Caco-2 (cell line): ENCODE measurements at regions of chr4 and their contacts with region 1.

Region 1: GRCh38 chr4:168710353-168710946 is 213.6 kb downstream of the PALLD start:
- DNase-seq: peak; percentile 30 to 36
- H3K4me3 ChIP-seq: no peak overlapping the region
- H3K4me3 Mint-ChIP-seq: no peak overlapping the region
- H3K27ac Mint-ChIP-seq: no peak overlapping the region
- H3K4me1 ChIP-seq: no peaks in the 10 kb centered on the region
- H3K4me1 Mint-ChIP-seq: no peaks in the 10 kb centered on the region
- H3K27me3 ChIP-seq: no peaks in the 10 kb centered on the region; the same call in 1 of the 2 replicates
- H3K27me3 Mint-ChIP-seq: peaks cover 3% of the 10 kb centered on the region
- CTCF ChIP-seq: peak; percentile 36 to 58

Region 2: DNA sequence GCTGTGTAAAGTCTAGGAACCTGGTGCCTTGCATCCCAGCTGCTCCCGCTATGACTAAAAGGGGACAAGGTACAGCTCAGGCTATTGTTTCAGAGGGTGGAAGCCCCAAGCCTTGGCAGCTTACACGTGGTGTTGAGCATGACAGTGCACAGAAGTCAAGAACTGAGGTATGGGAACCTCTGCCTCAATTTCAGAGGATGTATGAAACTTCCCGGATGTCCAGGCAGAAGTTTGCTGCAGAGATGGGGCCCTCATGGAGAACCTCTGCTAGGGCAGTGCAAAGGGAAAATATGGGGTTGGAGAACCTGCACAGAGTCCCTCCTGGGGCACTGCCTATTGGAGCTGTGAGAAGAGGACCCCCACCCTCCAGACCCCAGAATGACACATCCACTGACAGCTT is 468.5 kb before region 1 on chr4:
- CTCF ChIA-PET with region 1: no interaction called
- POLR2A ChIA-PET with region 1: no interaction called
- intact Hi-C with region 1: no loop called
- DNase-seq: no peak
- H3K4me3 ChIP-seq: no peak overlapping the region
- H3K4me3 Mint-ChIP-seq: no peak overlapping the region
- H3K27ac Mint-ChIP-seq: no peak overlapping the region
- H3K4me1 ChIP-seq: no peaks in the 10 kb centered on the region
- H3K4me1 Mint-ChIP-seq: no peaks in the 10 kb centered on the region
- H3K27me3 ChIP-seq: no peaks in the 10 kb centered on the region
- H3K27me3 Mint-ChIP-seq: no peaks in the 10 kb centered on the region
- CTCF ChIP-seq: no peak

Region 3: GRCh38 chr4:168528131-168528949 is 182.1 kb before region 1 on chr4:
- CTCF ChIA-PET with region 1: no interaction called
- POLR2A ChIA-PET with region 1: no interaction called
- intact Hi-C with region 1: no loop called
- DNase-seq: no peak
- H3K4me3 ChIP-seq: no peak overlapping the region
- H3K4me3 Mint-ChIP-seq: no peak overlapping the region
- H3K27ac Mint-ChIP-seq: no peak overlapping the region
- H3K4me1 ChIP-seq: no peaks in the 10 kb centered on the region
- H3K4me1 Mint-ChIP-seq: no peaks in the 10 kb centered on the region
- H3K27me3 ChIP-seq: no peaks in the 10 kb centered on the region
- H3K27me3 Mint-ChIP-seq: no peaks in the 10 kb centered on the region
- CTCF ChIP-seq: no peak

Region 4: GRCh38 chr4:168585168-168586091 is 125.0 kb before region 1 on chr4:
- CTCF ChIA-PET with region 1: no interaction called
- POLR2A ChIA-PET with region 1: no interaction called
- intact Hi-C with region 1: loop called (anchors 5 kb)
- DNase-seq: peak; percentile 63 to 67
- H3K4me3 ChIP-seq: no peak overlapping the region
- H3K4me3 Mint-ChIP-seq: no peak overlapping the region
- H3K27ac Mint-ChIP-seq: no peak overlapping the region
- H3K4me1 ChIP-seq: no peaks in the 10 kb centered on the region
- H3K4me1 Mint-ChIP-seq: no peaks in the 10 kb centered on the region
- H3K27me3 ChIP-seq: no peaks in the 10 kb centered on the region
- H3K27me3 Mint-ChIP-seq: no peaks in the 10 kb centered on the region
- CTCF ChIP-seq: peak; percentile 52 to 62

Region 5: DNA sequence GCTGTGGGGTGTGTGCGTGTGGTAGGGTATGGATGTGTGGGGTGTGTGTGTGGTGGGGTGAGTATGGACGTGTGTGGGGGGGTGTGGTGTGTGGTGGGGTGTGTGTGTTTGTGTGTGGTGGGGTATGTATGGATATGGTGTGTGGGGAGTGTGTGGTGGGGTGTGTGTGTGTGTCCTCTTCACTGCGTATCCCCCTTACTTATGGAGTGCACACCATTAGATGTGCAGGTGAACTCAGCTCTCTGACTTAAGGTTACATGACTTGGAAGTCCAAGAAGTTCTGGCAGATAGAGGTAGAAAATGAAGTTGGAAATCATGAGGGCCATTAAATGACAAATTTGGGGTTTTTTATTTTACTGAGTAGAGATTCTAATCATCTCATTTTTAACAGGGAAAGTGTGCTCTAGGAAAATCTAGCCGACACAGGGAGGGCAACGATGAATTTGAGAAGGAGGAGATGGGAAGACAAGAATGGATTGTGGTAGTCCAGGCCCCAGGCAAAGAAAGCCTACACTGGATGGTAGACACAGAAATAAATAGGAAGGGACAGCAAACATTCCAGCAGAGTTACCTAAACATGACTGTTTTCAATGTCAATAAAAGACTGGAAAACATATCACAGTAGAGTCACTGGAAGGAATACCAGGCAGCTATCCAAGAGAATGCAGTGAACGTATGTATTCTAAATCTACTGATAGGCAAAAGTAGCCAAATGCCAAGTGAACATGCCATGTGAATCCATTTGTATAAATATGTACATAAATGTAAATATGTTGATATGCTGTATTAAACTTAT is 30.9 kb before region 1 on chr4:
- CTCF ChIA-PET with region 1: no interaction called
- POLR2A ChIA-PET with region 1: no interaction called
- intact Hi-C with region 1: no loop called
- DNase-seq: no peak
- H3K4me3 ChIP-seq: no peak overlapping the region
- H3K4me3 Mint-ChIP-seq: no peak overlapping the region
- H3K27ac Mint-ChIP-seq: no peak overlapping the region
- H3K4me1 ChIP-seq: peaks cover 6% of the 10 kb centered on the region; the same call in 1 of the 2 replicates
- H3K4me1 Mint-ChIP-seq: peaks cover 6% of the 10 kb centered on the region
- H3K27me3 ChIP-seq: no peaks in the 10 kb centered on the region
- H3K27me3 Mint-ChIP-seq: no peaks in the 10 kb centered on the region
- CTCF ChIP-seq: no peak

Region 6: DNA sequence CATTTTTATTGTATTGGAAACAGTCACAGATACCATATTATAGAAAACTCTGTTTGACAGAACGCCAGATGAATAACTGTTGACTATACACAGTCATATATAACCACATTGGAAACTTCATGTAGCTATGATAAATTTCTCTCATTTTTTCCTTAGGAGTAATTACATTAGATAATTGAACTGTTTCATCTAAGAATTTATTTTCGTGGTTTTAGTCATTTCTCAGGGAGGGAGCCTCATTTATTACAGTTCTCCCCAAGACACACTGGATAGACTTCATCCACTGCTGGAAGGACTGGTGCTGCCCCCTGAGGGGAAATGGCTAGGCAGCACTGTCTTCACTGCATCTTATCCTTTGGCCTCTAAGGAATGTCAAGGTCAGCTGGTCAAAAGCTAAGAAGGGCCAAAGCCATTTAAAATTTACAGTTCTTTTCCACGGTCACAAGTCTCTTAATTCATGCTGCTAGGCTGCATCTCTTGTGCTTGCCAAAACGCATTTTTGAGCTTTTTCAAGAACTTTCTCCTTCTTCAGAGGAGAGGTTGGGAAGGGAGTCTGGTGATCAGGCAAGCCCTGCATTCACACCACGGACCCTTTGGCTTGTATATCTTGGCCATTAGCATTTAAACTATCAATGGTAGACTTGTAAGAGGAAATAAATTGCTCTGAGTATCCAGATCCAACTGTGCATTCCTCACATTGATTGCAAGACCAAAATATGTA is 154.5 kb after region 1 on chr4:
- CTCF ChIA-PET with region 1: no interaction called
- POLR2A ChIA-PET with region 1: no interaction called
- intact Hi-C with region 1: loop called (anchors 1 kb)
- DNase-seq: peak in 1 of 2 experiments; percentile 27
- H3K4me3 ChIP-seq: no peak overlapping the region
- H3K4me3 Mint-ChIP-seq: no peak overlapping the region
- H3K27ac Mint-ChIP-seq: no peak overlapping the region
- H3K4me1 ChIP-seq: no peaks in the 10 kb centered on the region
- H3K4me1 Mint-ChIP-seq: no peaks in the 10 kb centered on the region
- H3K27me3 ChIP-seq: no peaks in the 10 kb centered on the region
- H3K27me3 Mint-ChIP-seq: no peaks in the 10 kb centered on the region
- CTCF ChIP-seq: peak in 1 of 2 experiments; percentile 22

Region 7: GRCh38 chr4:168917138-168917779 is 206.8 kb after region 1 on chr4:
- CTCF ChIA-PET with region 1: interaction called, 9 read pairs
- POLR2A ChIA-PET with region 1: no interaction called
- intact Hi-C with region 1: loop called (anchors 1 kb)
- DNase-seq: peak in 1 of 2 experiments; percentile 30
- H3K4me3 ChIP-seq: no peak overlapping the region
- H3K4me3 Mint-ChIP-seq: no peak overlapping the region
- H3K27ac Mint-ChIP-seq: no peak overlapping the region
- H3K4me1 ChIP-seq: no peaks in the 10 kb centered on the region
- H3K4me1 Mint-ChIP-seq: no peaks in the 10 kb centered on the region
- H3K27me3 ChIP-seq: no peaks in the 10 kb centered on the region
- H3K27me3 Mint-ChIP-seq: no peaks in the 10 kb centered on the region
- CTCF ChIP-seq: peak; percentile 37 to 55

Region 8: DNA sequence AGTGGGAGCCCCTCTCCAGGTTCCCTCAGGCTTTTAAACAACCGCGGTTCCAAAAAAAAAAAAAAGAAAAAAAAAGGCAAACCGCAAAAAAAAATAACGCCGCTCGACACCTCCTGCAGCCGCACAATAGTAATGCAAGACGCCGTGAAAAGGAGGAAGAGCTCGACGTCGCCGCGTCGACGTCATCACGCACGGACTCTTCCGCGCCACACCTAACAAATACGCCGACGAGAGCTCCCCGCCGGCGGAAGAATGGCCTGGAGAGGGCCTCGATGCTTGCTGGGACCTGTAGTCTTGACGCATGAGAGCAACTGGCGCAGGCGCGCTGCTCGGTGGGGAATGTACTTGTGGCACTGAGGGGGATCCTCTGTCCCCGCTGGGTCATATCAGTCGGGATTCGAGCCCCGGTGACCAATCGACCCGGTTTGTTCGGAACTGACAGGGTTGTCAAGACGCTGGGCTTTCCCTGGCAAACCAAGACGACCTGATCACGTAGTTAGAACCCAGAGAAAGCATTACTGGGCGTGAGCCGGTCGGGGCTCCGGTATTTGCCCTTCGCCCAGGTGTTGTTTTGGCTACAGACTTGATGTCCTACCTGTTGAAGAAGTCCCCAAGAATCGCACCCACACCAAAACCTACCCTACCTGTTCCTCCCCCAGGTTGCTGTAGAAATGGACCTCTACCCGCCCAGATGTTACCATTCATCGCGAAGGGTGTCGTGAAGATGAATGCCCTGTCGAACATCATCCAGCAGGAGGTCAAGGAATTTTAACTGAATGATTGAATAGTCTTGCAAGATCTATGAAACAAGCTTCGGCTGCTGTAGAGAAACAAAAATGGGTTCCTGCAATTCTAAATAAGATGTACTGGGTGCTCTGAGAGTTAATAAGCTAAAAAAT is 299.9 kb after region 1 on chr4 and contains the start of gene CBR4:
- CTCF ChIA-PET with region 1: no interaction called
- POLR2A ChIA-PET with region 1: no interaction called
- intact Hi-C with region 1: loop called (anchors 2 kb)
- DNase-seq: peak; percentile 94 to 97
- H3K4me3 ChIP-seq: peak within 1 kb of the TSS; percentile 65
- H3K4me3 Mint-ChIP-seq: peak within 1 kb of the TSS; percentile 91
- H3K27ac Mint-ChIP-seq: peak within 1 kb of the TSS; percentile 97
- H3K4me1 ChIP-seq: peaks cover 28% of the 10 kb centered on the region
- H3K4me1 Mint-ChIP-seq: peaks cover 16% of the 10 kb centered on the region
- H3K27me3 ChIP-seq: no peaks in the 10 kb centered on the region
- H3K27me3 Mint-ChIP-seq: no peaks in the 10 kb centered on the region
- CTCF ChIP-seq: peak; percentile 23 to 41
- total RNA-seq, gene CBR4: 21.4 and 22.5 TPM in 2 replicates